ENCODE measurements at regions of chr3 and their contacts with region 1.

Region 1: GRCh38 chr3:112097378-112097777 is 11.2 kb downstream of the C3orf52 start:
- DNase-seq: peak; percentile 99
- H3K4me3 ChIP-seq: no peak overlapping the region
- H3K27ac ChIP-seq: peak overlapping the region; percentile 49
- H3K4me1 ChIP-seq: peaks cover 25% of the 10 kb centered on the region
- H3K27me3 ChIP-seq: no peaks in the 10 kb centered on the region
- CTCF ChIP-seq: no peak
- POLR2A ChIP-seq: no peak

Region 2: GRCh38 chr3:111910806-111911205 is 186.6 kb before region 1 on chr3:
- CTCF ChIA-PET with region 1: no interaction called
- POLR2A ChIA-PET with region 1: no interaction called
- dilution Hi-C with region 1: no loop called
- intact Hi-C with region 1: loop called (anchors 10 kb)
- DNase-seq: peak; percentile 65
- H3K4me3 ChIP-seq: no peak overlapping the region
- H3K27ac ChIP-seq: no peak overlapping the region
- H3K4me1 ChIP-seq: peaks cover 20% of the 10 kb centered on the region
- H3K27me3 ChIP-seq: no peaks in the 10 kb centered on the region
- CTCF ChIP-seq: no peak
- POLR2A ChIP-seq: no peak

Region 3: GRCh38 chr3:112074721-112075497 is 22.5 kb before region 1 on chr3:
- CTCF ChIA-PET with region 1: no interaction called
- POLR2A ChIA-PET with region 1: no interaction called
- dilution Hi-C with region 1: no loop called
- intact Hi-C with region 1: loop called (anchors 1 kb)
- DNase-seq: peak; percentile 91
- H3K4me3 ChIP-seq: no peak overlapping the region
- H3K27ac ChIP-seq: peak overlapping the region; percentile 68
- H3K4me1 ChIP-seq: peaks cover 17% of the 10 kb centered on the region
- H3K27me3 ChIP-seq: no peaks in the 10 kb centered on the region
- CTCF ChIP-seq: no peak
- POLR2A ChIP-seq: peak; percentile 17

Region 4: DNA sequence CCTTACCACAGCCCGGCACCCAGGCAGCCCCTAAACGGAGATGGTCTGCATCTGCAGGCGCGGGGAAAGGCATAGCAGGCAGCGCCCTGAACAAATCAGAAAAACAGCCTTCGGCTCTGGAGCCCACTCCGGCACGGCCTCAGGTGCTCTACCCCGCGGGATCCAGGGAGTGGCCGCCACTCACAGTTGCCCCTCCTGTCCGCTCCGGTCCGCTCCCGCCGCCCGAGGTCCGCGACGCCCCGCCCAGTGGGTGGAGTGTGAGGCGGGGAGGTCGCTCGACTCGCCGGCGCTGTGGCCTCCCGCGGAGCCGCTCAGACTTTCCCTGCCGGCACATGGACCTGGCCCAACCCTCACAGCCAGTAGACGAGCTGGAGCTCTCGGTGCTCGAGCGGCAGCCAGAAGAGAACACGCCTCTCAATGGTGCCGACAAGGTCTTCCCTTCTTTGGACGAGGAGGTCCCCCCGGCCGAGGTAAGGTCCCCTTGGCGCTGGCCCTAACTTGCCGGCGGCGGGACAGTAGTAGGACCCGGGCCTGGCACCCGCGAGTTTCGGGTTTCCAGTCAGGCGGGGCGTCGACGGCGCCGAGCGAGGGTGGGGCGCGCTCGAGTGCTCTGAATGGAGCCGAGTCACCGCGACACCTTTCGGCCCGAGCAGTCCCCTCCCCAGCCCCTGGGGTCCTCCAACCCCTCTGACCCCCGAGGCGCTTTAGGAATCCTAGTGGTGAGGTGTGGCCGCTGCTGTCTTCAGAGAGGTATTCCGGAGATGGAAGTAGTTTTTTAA is 11.1 kb before region 1 on chr3 and contains the start of gene C3orf52:
- CTCF ChIA-PET with region 1: interaction called, 7 read pairs
- POLR2A ChIA-PET with region 1: no interaction called
- dilution Hi-C with region 1: no loop called
- intact Hi-C with region 1: loop called (anchors 1 kb)
- DNase-seq: peak; percentile 83
- H3K4me3 ChIP-seq: peak within 1 kb of the TSS; percentile 1 to 70 (median 46)
- H3K27ac ChIP-seq: peak within 1 kb of the TSS; percentile 1
- H3K4me1 ChIP-seq: peaks cover 16% of the 10 kb centered on the region
- H3K27me3 ChIP-seq: no peaks in the 10 kb centered on the region
- CTCF ChIP-seq: no peak
- POLR2A ChIP-seq: peak; percentile 53
- total RNA-seq, gene C3orf52: 2.1 and 4.6 TPM in 2 replicates

Region 5: DNA sequence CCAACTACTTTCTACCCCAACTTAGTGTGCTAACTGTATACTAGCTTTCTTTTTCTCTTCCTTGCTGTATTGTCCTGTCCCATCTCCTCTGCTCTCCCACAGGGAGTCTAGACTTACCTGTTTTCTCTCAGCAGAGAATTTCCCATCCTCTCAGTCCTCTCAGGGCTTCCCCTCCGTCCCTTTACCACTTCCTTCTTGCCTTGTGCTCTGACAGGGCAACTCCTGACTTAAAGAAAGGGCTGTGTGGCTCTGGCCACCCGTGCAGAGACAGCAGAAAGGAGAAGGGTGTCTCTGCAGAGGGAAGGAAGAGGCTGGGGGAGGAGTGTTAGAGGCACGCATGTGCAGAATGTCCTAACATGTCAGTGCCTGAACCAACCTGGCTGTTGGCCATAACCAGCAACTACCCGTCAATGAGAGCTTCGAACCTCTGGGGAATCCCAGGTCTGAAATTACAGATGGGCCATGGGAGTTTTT is 35.6 kb after region 1 on chr3 and contains the start of gene GCSAM:
- CTCF ChIA-PET with region 1: no interaction called
- POLR2A ChIA-PET with region 1: no interaction called
- dilution Hi-C with region 1: no loop called
- intact Hi-C with region 1: no loop called
- DNase-seq: no peak
- H3K4me3 ChIP-seq: no peak within 1 kb of the TSS
- H3K27ac ChIP-seq: no peak within 1 kb of the TSS
- H3K4me1 ChIP-seq: no peaks in the 10 kb centered on the region
- H3K27me3 ChIP-seq: no peaks in the 10 kb centered on the region
- CTCF ChIP-seq: no peak
- POLR2A ChIP-seq: no peak
- total RNA-seq, gene GCSAM: not detected in 2 replicates